ENCODE measurements at regions of chrX and their contacts with region 1.

Region 1: GRCh38 chrX:116204932-116205331 is 34.4 kb downstream of the AGTR2 start:
- DNase-seq: peak; percentile 28
- H3K4me3 ChIP-seq: no peak overlapping the region
- H3K27ac ChIP-seq: no peak overlapping the region
- H3K4me1 ChIP-seq: no peaks in the 10 kb centered on the region
- H3K27me3 ChIP-seq: no peaks in the 10 kb centered on the region

Region 2: DNA sequence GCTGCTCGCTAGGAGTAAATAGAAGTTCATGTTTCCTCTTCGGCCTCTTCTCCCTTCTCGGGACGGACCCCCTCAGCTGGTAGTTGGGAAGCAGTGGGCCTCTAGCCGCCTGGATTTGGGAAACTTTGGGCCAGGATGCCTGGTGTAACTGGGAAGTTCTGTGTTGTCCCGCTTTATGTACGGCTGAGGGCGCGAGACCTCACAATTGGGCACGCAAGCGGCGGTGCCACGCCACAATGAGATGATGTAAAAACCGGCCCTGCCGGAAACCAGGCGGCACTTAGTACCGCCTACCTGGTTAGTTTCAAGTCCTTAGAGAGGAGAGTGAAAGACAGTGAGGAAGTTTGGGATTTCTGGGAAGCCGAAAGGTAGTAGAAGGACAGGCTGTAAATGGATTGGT is 257.9 kb after region 1 on chrX and contains the start of gene CT83:
- in situ Hi-C with region 1: loop called (anchors 25 kb)
- DNase-seq: no peak
- H3K4me3 ChIP-seq: no peak within 1 kb of the TSS
- H3K27ac ChIP-seq: no peak within 1 kb of the TSS
- H3K4me1 ChIP-seq: no peaks in the 10 kb centered on the region
- H3K27me3 ChIP-seq: no peaks in the 10 kb centered on the region
- total RNA-seq, gene CT83: not detected in 2 replicates

Region 3: GRCh38 chrX:116961872-116962582 is 757.1 kb after region 1 on chrX:
- in situ Hi-C with region 1: loop called (anchors 25 kb)
- DNase-seq: peak; percentile 43
- H3K4me3 ChIP-seq: no peak overlapping the region
- H3K27ac ChIP-seq: no peak overlapping the region
- H3K4me1 ChIP-seq: no peaks in the 10 kb centered on the region
- H3K27me3 ChIP-seq: no peaks in the 10 kb centered on the region

Measured in GM23248 (cell line).